HEK293 (cell line): ENCODE measurements at regions of chr2 and their contacts with region 1.

Region 1: DNA sequence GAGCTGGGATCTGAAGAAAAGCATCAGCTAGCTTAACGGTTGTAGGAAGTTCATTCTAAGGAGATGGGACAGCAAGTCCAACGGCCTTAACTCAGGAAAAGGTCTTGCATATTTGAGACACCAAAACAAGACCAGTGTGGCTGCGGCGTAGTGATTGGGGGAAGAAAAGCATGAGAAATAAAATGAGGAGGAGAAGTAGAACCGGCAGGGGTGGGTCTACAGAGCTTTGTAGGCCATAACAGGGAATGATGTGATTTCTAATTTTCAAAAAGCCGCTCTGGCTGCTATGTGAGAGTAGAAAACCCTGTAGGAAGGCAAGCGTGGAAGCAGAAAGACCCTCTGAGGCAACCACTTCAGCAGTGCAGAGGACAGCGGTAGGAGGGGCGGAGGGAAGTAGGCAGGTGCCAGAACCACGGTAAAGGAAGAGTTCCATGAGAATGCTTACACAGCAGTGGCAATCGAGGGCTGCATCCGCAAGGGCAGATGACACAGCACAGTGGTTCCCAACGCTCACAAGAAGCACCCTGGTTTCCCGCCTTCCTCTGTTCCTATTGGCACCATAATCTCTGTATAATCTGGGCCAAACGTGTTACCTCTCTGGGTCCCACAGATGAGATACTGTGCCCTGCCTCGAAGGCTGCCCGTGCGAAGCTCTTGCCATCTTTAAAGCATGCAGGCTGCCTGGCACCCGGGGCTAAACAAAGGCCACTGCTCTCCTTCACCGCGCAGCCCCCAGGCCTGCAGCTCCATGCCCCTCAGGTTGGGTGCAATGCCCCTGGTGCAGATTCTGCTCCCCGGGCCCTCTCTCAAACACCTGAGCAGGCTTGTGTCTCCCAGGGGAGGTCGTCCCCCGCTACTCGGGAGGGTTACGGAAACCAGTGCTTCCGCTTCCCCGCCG is 791 bp downstream of the ANKRD39 start:
- H3K4me3 ChIP-seq: peak overlapping the region; percentile 77
- H3K27ac ChIP-seq: peak overlapping the region; percentile 78
- H3K4me1 ChIP-seq: no peaks in the 10 kb centered on the region
- CTCF ChIP-seq: no peak

Region 2: GRCh38 chr2:96685577-96686459 is 171.2 kb before region 1 on chr2:
- CTCF ChIA-PET with region 1: no interaction called
- POLR2A ChIA-PET with region 1: interaction called, 10 read pairs
- H3K4me3 ChIP-seq: no peak overlapping the region
- H3K27ac ChIP-seq: no peak overlapping the region
- H3K4me1 ChIP-seq: peaks cover 12% of the 10 kb centered on the region
- CTCF ChIP-seq: no peak

Region 3: DNA sequence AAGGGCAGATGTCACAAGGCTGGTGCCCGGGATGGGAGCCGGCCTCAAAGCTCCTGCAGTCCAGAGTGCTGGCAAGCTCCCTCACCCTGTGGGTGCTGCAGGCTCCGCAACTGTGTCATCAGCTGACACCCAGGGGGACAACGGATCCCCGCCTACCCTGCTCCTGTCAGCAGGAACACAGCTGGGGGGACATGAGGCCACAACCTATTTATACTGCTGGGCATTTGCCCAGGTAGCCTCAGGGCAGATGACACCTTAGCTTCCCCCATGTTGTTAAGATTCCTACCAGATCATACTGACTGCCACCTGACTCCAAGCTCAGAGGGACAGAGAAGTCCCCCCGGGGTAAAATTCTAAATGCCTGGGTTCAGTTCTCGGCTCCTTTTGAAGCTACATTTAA is 14.4 kb before region 1 on chr2:
- CTCF ChIA-PET with region 1: interaction called, 5 read pairs
- POLR2A ChIA-PET with region 1: interaction called, 11 read pairs
- H3K4me3 ChIP-seq: no peak overlapping the region
- H3K27ac ChIP-seq: no peak overlapping the region
- H3K4me1 ChIP-seq: no peaks in the 10 kb centered on the region
- CTCF ChIP-seq: no peak

Region 4: DNA sequence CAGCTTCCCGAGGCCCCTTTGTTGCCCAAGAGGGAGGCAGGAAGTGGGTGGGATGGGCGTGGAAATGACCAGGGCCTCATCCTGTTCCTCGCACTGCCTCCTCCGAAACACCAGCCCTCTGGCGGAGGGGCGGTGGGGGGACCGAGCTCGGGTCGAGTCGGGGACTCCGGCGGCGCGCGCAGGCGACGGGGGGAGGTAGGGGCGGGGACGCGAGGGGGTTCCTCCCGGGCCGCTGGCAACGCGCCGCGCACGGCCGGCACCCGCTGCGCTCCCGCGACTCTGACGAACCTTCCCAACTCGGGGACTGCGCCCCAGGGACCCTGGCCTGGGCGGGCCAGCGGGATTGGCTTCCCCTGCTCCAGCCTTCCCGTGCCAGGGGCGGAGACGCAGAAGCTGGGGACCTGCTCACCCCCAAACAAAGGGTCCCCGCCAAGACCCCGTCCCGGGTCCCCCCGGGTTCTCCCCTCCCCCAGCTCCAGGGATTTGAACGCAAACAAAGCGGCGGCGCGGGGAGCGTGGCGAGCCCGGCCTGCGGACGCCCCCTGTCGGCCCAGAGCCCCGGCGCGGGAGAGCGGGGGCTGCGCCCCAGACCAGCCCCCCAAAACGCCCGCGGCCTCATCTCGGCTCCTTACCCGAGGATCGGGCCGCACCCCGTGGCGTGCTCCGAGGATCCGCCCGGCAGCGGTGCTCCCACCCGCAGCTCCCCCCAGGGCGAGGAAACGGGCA is 11.7 kb after region 1 on chr2:
- CTCF ChIA-PET with region 1: interaction called, 33 read pairs
- POLR2A ChIA-PET with region 1: interaction called, 39 read pairs
- H3K4me3 ChIP-seq: peak overlapping the region; percentile 87
- H3K27ac ChIP-seq: peak overlapping the region; percentile 93
- H3K4me1 ChIP-seq: peaks cover 3% of the 10 kb centered on the region; the same call in 1 of the 2 replicates
- CTCF ChIP-seq: peak; percentile 49

Region 5: DNA sequence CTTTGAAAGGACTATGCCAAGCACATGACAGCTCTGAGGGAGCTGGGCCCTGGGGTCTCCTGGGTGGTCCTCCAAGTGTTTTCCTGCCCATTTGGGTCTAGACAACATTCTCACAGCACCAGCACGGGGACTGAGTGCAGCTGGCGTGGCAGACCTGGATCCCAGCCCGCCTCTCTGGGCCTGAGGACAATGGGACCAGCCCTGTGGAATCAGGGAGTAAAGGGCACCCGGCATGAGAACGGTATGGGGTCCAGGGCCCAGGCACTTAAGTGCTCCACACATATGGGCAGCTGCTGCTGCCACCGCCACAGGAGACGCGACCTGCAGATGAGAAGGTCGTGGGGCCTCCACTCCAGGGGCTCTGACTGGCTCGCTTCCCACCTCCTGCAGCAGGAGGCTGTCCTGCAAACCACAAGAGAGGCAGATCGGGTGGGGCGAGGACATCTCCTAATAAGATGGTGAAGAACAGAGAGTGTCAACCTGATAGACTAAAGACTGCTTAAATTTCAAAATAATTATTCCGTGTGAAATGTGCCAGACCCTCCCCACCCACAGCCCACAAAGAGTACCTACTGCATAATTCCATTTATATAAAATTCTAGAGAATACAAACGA is 83.1 kb after region 1 on chr2:
- CTCF ChIA-PET with region 1: interaction called, 23 read pairs
- POLR2A ChIA-PET with region 1: interaction called, 7 read pairs
- H3K4me3 ChIP-seq: no peak overlapping the region
- H3K27ac ChIP-seq: no peak overlapping the region
- H3K4me1 ChIP-seq: no peaks in the 10 kb centered on the region
- CTCF ChIP-seq: no peak

Region 6: GRCh38 chr2:96945012-96945804 is 88.2 kb after region 1 on chr2:
- CTCF ChIA-PET with region 1: interaction called, 115 read pairs
- POLR2A ChIA-PET with region 1: interaction called, 21 read pairs
- H3K4me3 ChIP-seq: no peak overlapping the region
- H3K27ac ChIP-seq: no peak overlapping the region
- H3K4me1 ChIP-seq: no peaks in the 10 kb centered on the region
- CTCF ChIP-seq: no peak

Region 7: GRCh38 chr2:96951093-96951654 is 94.1 kb after region 1 on chr2:
- CTCF ChIA-PET with region 1: interaction called, 115 read pairs
- POLR2A ChIA-PET with region 1: interaction called, 21 read pairs
- H3K4me3 ChIP-seq: no peak overlapping the region
- H3K27ac ChIP-seq: no peak overlapping the region
- H3K4me1 ChIP-seq: no peaks in the 10 kb centered on the region
- CTCF ChIP-seq: peak; percentile 95